ENCODE measurements at regions of chr1 and their contacts with region 1.

Region 1: DNA sequence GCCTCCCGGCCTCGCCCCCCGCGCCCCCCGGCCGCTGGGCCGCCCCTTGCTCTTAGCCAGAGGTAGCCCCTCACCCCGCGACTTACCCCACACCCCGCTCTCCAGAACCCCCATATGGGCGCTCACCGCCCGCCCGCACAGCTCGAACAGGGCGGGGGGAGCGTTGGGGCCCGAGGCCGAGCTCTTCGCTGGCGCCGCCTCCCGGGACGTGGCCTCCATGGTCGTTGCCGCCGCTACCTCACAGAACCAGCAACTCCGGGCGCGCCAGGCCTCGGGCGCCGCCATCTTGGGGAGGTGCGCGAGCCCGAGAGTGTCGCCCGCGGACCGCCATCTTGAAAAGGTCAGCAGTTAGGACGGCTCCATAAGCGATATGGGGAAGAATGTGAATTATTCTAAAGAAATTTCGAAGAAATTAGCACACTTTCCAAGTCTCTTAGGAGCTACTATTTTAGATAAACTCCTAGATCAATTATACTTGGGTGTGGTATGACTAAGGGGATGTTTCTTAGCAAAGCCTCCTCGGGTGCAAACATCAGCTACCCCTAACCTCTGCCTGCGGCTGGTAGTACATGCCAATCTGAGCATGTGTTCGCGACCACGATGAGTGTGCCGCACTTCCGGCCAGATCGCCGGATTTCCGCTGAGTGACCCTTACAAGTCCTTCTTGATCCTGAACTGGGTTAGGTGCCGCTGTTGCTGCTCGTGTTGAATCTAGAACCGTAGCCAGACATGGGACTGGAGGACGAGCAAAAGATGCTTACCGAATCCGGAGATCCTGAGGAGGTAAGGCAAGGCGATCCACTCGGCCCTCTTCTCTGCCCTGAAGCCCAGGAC is at the starts of genes LRRC41 and UQCRH:
- DNase-seq: peak; percentile 91 to 96 (median 94)
- ATAC-seq: peak; percentile 94
- H3K4me3 ChIP-seq: peak within 1 kb of the TSS; percentile 83
- H3K4me3 Mint-ChIP-seq: peak within 1 kb of the TSS; percentile 94 to 99 (median 98)
- H3K27ac ChIP-seq: peak within 1 kb of the TSS; percentile 98
- H3K27ac Mint-ChIP-seq: peak within 1 kb of the TSS; percentile 95 to 99 (median 97)
- H3K4me1 ChIP-seq: peaks cover 19 to 37% of the 10 kb centered on the region in 2 donors
- H3K4me1 Mint-ChIP-seq: peaks cover 31 to 65% (median 46%) of the 10 kb centered on the region in 7 donors
- H3K27me3 ChIP-seq: no peaks in the 10 kb centered on the region
- H3K27me3 Mint-ChIP-seq: peaks cover 0 to 2% (median 0%) of the 10 kb centered on the region in 5 donors
- total RNA-seq, gene LRRC41: 34.4 to 50.5 (median 37.2) TPM
- total RNA-seq, gene UQCRH: 107 to 260 (median 127) TPM

Region 2: DNA sequence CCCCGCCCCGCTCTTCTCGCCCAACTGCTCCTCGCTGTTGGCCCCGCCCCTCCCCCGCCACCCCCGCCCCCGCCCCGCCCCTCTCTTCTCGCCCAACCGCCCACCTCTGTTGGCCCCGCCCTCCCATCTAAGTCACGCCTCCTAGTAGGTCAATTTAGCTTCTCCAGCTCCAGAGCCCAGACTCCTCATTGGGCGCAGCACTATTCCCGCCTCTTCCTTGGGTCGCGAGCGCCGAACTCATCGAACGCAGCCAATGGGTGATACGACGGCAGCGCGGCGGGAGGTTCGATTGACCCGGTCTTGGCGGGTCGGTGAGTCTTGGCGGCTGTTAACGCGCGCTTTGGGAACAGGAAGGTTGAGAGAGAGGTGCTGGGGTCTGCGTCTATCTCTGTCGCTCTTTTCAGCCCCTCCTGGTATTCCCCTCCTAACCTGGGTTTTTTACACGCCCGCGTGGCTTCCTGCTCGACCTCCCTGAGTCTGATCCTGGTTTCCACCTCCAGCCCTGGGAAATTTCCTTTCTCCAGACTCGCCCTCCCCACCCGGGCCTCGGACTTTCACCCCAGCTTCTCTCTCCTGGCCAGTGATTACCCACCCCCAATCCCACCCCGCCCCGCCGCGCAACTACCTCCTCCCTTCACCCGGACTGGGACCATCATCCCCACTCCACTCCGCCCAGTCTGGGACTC is 55.7 kb before region 1 on chr1 and contains the start of gene RAD54L:
- CTCF ChIA-PET with region 1: interaction called, 4 read pairs
- POLR2A ChIA-PET with region 1: interaction called, 9 read pairs
- intact Hi-C with region 1: loop called (anchors 1 kb)
- DNase-seq: peak; percentile 83 to 97 (median 95)
- ATAC-seq: peak; percentile 99
- H3K4me3 ChIP-seq: peak within 1 kb of the TSS; percentile 89
- H3K4me3 Mint-ChIP-seq: peak within 1 kb of the TSS; percentile 86 to 100 (median 94)
- H3K27ac ChIP-seq: peak within 1 kb of the TSS; percentile 66
- H3K27ac Mint-ChIP-seq: peak within 1 kb of the TSS; percentile 62 to 96 (median 78)
- H3K4me1 ChIP-seq: peaks cover 4 to 8% of the 10 kb centered on the region in 2 donors
- H3K4me1 Mint-ChIP-seq: peaks cover 0 to 41% (median 17%) of the 10 kb centered on the region in 7 donors
- H3K27me3 ChIP-seq: no peaks in the 10 kb centered on the region
- H3K27me3 Mint-ChIP-seq: no peaks in the 10 kb centered on the region
- total RNA-seq, gene RAD54L: 0.94 to 31.9 (median 2.1) TPM

Region 3: GRCh38 chr1:46285730-46286477 is 17.4 kb before region 1 on chr1:
- CTCF ChIA-PET with region 1: no interaction called
- POLR2A ChIA-PET with region 1: interaction called, 4 read pairs
- intact Hi-C with region 1: loop called in 1 of 2 experiments (anchors 2 kb)
- DNase-seq: peak in 5 of 9 donors; percentile 3 to 38 (median 19)
- ATAC-seq: peak; percentile 26
- H3K4me3 ChIP-seq: no peak overlapping the region
- H3K4me3 Mint-ChIP-seq: no peak overlapping the region
- H3K27ac ChIP-seq: no peak overlapping the region
- H3K27ac Mint-ChIP-seq: peak overlapping the region in 5 of 9 donors; percentile 23 to 58 (median 56)
- H3K4me1 ChIP-seq: no peaks in the 10 kb centered on the region
- H3K4me1 Mint-ChIP-seq: peaks cover 4 to 36% (median 16%) of the 10 kb centered on the region in 7 donors
- H3K27me3 ChIP-seq: no peaks in the 10 kb centered on the region
- H3K27me3 Mint-ChIP-seq: no peaks in the 10 kb centered on the region